Activated T-helper 1 cell treated with anti-CD3 and anti-CD28 coated beads, Interleukin-12 subunit alpha, Interleukin-12 subunit beta, Interleukin-2, Interleukin-4 antibody, amounts not matched to agents 30 ng/mL and 10 ng/mL and 1 ng/mL, durations not matched to agents 14 hours and 24 hours and 36 hours (primary cell): ENCODE measurements at regions of chr2 and their contacts with region 1.

Region 1: GRCh38 chr2:11829947-11830707 is 83.7 kb downstream of the LPIN1 start:
- DNase-seq: peak; percentile 59
- H3K4me3 Mint-ChIP-seq: peak overlapping the region; percentile 76
- H3K27ac Mint-ChIP-seq: peak overlapping the region; percentile 75
- H3K4me1 Mint-ChIP-seq: peaks cover 44% of the 10 kb centered on the region
- H3K27me3 Mint-ChIP-seq: peaks cover 37% of the 10 kb centered on the region

Region 2: GRCh38 chr2:11743846-11744553 is 86.1 kb before region 1 on chr2:
- intact Hi-C with region 1: loop called (anchors 1 kb)
- DNase-seq: peak; percentile 67
- H3K4me3 Mint-ChIP-seq: peak overlapping the region; percentile 0
- H3K27ac Mint-ChIP-seq: peak overlapping the region; percentile 79
- H3K4me1 Mint-ChIP-seq: peaks cover 55% of the 10 kb centered on the region
- H3K27me3 Mint-ChIP-seq: peaks cover 3% of the 10 kb centered on the region

Region 3: DNA sequence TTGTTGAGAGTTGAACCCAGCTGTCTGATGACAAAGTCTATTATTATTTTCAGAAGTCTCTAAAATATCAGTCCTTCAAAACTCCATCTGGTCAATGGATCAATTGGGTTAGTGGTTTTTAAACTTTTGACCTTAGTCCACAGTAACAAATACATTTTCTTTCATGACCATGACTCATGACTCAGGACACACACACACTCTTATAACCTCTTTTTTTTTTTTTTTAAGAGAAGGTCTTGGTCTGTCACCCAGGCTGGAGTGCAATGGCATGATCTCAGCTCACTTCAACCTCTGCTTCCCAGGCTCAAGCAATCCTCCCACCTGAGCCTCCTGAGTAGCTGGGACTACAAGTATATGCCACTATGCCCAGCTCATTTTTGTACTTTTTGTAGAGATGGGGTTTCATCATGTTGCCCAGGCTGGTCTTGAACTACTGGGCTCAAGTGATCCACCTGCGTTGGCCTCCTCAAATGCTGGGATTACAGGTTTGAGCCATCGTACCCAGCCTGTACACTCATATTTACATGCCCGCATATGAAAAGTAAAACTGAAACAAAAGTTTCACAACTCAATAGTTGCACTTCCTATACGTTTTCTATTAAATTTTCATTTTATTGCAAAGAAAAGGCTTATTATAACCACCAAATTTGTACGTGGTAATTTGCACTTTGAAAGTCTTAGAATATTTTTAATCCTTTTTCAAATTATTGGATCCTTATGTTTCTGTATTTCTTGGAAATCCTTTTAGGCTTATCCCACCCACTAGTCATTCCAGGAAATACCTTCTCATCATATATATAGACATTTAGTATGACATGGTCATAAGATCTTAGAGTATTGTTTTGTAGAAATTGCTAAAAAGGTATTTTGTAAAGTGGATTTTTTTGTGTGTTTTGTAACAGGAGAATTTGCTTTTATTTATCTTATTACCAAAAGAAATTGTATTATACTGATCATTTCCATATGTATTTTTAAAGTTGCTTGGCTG is 115.3 kb after region 1 on chr2:
- intact Hi-C with region 1: loop called (anchors 5 kb)
- DNase-seq: peak; percentile 1
- H3K4me3 Mint-ChIP-seq: peak overlapping the region; percentile 24
- H3K27ac Mint-ChIP-seq: no peak overlapping the region
- H3K4me1 Mint-ChIP-seq: peaks cover 16% of the 10 kb centered on the region
- H3K27me3 Mint-ChIP-seq: peaks cover 2% of the 10 kb centered on the region

Region 4: GRCh38 chr2:12397854-12398253 is 567.7 kb after region 1 on chr2:
- intact Hi-C with region 1: no loop called
- DNase-seq: no peak
- H3K4me3 Mint-ChIP-seq: no peak overlapping the region
- H3K27ac Mint-ChIP-seq: no peak overlapping the region
- H3K4me1 Mint-ChIP-seq: peaks cover 7% of the 10 kb centered on the region
- H3K27me3 Mint-ChIP-seq: peaks cover 21% of the 10 kb centered on the region

Region 5: GRCh38 chr2:12416600-12416999 is 586.5 kb after region 1 on chr2:
- intact Hi-C with region 1: loop called (anchors 10 kb)
- DNase-seq: peak; percentile 41
- H3K4me3 Mint-ChIP-seq: no peak overlapping the region
- H3K27ac Mint-ChIP-seq: no peak overlapping the region
- H3K4me1 Mint-ChIP-seq: peaks cover 65% of the 10 kb centered on the region
- H3K27me3 Mint-ChIP-seq: peaks cover 2% of the 10 kb centered on the region

Region 6: GRCh38 chr2:12856934-12857601 is 1026.9 kb after region 1 on chr2:
- intact Hi-C with region 1: loop called (anchors 1 kb)
- DNase-seq: peak; percentile 26
- H3K4me3 Mint-ChIP-seq: no peak overlapping the region
- H3K27ac Mint-ChIP-seq: no peak overlapping the region
- H3K4me1 Mint-ChIP-seq: peaks cover 18% of the 10 kb centered on the region
- H3K27me3 Mint-ChIP-seq: no peaks in the 10 kb centered on the region

Region 7: DNA sequence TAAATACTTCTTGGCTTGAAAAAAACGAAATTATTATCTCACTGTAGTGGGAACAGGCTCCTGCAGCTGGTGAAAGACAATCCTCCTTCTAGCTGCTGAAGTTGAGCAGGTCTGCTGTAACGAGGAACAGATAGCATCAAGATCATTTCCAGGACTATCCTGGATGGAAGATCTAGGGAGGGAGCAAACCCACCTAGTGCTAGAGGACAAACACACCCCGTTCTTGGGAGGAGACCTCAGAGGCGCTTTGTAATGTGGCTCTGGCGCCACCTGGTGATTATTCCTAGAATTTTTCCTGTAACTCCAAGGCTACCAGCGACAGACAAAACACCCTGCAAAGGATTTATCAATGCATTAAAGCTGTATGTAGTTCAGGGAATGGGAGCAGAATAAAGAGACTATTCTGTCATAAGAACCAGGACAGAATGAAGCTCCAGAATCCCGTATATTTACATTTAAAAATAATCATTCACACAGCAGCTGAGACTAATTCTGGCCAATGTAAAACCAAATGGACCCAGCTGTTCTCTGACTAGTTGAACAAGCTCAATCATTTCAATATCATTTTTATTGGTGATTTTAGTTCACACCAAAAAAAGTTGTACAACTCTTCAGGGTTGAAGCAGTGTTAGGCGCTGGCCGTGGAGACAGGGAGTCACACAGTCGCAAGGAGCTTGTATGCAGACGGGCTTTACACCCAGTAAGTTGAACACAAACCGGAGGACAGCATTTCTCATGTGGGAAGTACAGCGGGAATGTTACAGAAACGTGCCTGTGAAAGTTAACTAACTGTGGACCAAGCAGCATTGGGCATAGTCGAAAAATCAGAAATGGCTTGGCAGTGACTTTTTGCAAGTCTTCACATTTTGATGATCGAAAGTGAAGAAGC is 1176.9 kb after region 1 on chr2:
- intact Hi-C with region 1: loop called (anchors 1 kb)
- DNase-seq: peak; percentile 39
- H3K4me3 Mint-ChIP-seq: no peak overlapping the region
- H3K27ac Mint-ChIP-seq: no peak overlapping the region
- H3K4me1 Mint-ChIP-seq: no peaks in the 10 kb centered on the region
- H3K27me3 Mint-ChIP-seq: peaks cover 32% of the 10 kb centered on the region